BJ (cell line): ENCODE measurements at regions of chr1 and their contacts with region 1.

Region 1: GRCh38 chr1:235415008-235415904 is 48.0 kb downstream of the TBCE start:
- DNase-seq: no peak
- H3K4me3 ChIP-seq: no peak overlapping the region
- H3K27me3 ChIP-seq: no peaks in the 10 kb centered on the region
- CTCF ChIP-seq: peak; percentile 74

Region 2: GRCh38 chr1:235105051-235106043 is 309.9 kb before region 1 on chr1:
- CTCF ChIA-PET with region 1: interaction called, 22 read pairs
- POLR2A ChIA-PET with region 1: no interaction called
- DNase-seq: no peak
- H3K4me3 ChIP-seq: no peak overlapping the region
- H3K27me3 ChIP-seq: no peaks in the 10 kb centered on the region
- CTCF ChIP-seq: no peak

Region 3: DNA sequence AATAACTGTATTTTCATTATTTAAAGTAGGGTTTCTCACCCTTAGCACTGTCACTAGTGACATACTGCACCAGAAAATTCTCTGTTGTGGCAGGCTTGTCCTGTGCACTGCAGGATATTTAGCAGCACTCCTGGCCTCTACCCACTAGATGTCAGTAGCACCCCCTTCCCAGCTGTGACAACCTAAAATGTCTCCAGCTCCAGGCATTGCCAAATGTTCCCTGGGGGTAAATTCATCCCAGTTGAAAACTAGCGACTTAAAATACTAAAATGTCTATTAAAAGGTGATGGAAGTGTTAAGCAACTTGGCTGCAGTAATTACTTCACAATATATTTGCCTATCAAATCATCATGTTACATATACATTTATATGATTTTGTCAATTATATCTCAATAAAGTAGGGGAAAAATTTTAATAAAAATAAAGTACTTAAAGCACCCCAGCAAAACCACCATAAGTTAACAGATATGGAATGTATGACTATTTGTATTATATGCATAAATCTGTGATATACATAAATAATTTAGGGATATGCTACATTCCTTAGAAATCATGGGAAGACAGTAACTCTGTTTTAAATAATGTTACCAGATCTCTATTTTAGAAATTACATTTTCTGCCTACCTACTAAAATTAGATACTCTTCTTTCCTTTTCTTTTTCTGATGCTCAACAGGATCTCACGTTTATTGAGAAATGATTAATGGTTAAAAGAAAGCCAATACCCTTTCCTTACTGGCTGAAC is 161.9 kb before region 1 on chr1:
- CTCF ChIA-PET with region 1: interaction called, 45 read pairs
- POLR2A ChIA-PET with region 1: no interaction called
- DNase-seq: no peak
- H3K4me3 ChIP-seq: no peak overlapping the region
- H3K27me3 ChIP-seq: no peaks in the 10 kb centered on the region
- CTCF ChIP-seq: peak; percentile 86

Region 4: GRCh38 chr1:235328357-235329138 is 86.7 kb before region 1 on chr1 and contains the start of gene GGPS1:
- CTCF ChIA-PET with region 1: interaction called, 21 read pairs
- POLR2A ChIA-PET with region 1: no interaction called
- DNase-seq: peak; percentile 99
- H3K4me3 ChIP-seq: peak within 1 kb of the TSS; percentile 94
- H3K27me3 ChIP-seq: no peaks in the 10 kb centered on the region
- CTCF ChIP-seq: 0 out of 2 replicates have a peak, but pooled peaks have one; percentile 4
- polyA plus RNA-seq, gene GGPS1: 18.8 and 37.3 TPM in 2 replicates

Region 5: DNA sequence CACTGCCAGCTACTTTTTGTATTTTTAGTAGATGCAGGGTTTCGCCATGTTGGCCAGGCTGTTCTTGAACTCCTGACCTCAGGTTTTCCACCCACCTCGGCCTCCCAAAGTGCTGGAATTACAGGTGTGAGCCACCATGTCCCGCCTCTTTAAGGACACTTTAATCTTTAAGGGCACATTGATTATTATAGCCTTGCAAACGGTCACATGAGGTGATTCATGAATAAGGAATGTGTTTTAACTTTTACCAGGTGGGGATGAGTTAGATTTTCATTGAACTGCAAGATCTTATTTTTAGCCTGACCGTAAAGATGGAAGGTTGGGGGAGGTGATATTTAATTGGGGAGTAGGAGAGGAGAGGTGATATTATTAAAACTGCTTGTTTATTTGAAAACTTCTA is 13.9 kb after region 1 on chr1:
- CTCF ChIA-PET with region 1: interaction called, 16 read pairs
- POLR2A ChIA-PET with region 1: no interaction called
- DNase-seq: no peak
- H3K4me3 ChIP-seq: no peak overlapping the region
- H3K27me3 ChIP-seq: no peaks in the 10 kb centered on the region
- CTCF ChIP-seq: no peak

Region 6: DNA sequence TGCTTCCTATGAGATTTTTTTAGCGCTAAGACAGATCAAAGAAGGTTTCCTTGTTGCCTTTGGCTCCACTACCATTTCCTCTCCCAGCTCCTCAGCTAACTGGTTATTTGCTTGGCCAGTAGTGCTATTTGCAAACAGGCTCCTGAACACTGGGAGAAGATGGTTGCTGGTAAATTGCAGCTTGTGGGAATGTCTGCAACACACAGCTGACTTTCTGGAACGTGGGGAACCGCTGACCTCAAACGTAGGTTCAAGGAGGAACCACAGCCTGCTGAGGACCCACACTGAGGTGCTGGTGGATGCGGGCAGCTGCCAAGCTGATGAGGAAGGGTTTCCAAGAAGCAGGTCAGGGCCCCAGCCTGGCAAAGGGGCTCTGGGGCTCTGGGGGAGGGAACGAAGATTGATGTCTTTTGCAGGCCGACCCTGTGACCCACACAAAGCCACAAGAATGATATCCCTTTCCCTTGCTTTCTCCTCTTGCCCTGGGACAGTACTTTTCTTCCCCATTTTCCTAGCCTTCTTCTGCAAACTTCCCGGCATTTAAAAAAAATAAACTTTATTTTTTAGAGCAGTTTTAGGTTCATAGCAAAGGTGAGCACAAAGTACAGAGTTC is 209.6 kb after region 1 on chr1:
- CTCF ChIA-PET with region 1: no interaction called
- POLR2A ChIA-PET with region 1: no interaction called
- DNase-seq: no peak
- H3K4me3 ChIP-seq: no peak overlapping the region
- H3K27me3 ChIP-seq: peaks cover 1% of the 10 kb centered on the region
- CTCF ChIP-seq: no peak